ENCODE measurements at regions of chr12 and their contacts with region 1.

Region 1: GRCh38 chr12:1517007-1517406 is 77.4 kb downstream of the FBXL14 start:
- DNase-seq: peak in 1 of 2 experiments; percentile 90
- H3K4me3 ChIP-seq: no peak overlapping the region
- H3K27ac ChIP-seq: no peak overlapping the region
- H3K4me1 ChIP-seq: no peaks in the 10 kb centered on the region; a peak in 2 of 7 replicates
- H3K27me3 ChIP-seq: no peaks in the 10 kb centered on the region
- CTCF ChIP-seq: peak; percentile 75 to 88 (median 79)
- EP300 ChIP-seq: no peak
- POLR2A ChIP-seq: no peak
- RAD21 ChIP-seq: peak; percentile 85 to 95

Region 2: DNA sequence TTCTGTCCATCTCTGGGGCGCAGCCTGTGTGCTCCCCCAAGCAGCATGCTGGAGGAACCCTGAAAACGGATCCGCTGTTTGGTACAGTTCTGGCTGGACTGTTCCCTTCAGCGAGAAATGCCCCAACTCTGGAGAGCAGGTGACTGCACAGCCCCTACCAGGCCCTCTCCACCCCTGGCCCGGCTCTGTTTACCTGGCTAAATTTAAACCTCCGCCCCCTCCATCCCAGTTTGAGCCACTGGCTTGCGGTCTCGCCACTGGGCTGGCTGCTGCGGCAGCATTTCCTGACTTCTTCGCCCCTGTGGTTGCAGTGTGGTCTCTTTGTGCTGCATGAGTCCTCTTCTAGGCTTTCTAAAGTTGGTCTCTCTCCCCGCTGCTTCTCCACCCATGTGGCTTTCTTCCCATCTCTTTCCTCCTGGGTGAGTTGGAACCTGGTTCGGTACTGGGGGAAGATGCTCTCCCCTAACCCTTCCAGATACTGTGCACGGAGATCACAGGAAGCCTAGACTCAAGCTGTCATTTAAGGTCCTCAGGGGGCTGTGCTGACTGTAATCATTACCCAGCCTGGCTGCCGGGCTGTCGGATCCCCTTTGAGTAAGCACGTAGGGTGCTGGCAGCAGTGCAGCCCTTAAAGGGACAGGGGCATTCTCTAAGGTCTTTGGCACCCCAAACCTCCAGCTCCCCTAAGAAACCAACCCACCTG is 16.7 kb after region 1 on chr12:
- CTCF ChIA-PET with region 1: interaction called, 22 read pairs
- POLR2A ChIA-PET with region 1: no interaction called
- DNase-seq: no peak
- H3K4me3 ChIP-seq: no peak overlapping the region
- H3K27ac ChIP-seq: no peak overlapping the region
- H3K4me1 ChIP-seq: peaks cover 0 to 5% (median 4%) of the 10 kb centered on the region in 4 experiments; a peak in 5 of 7 replicates
- H3K27me3 ChIP-seq: peaks cover 45 to 71% (median 56%) of the 10 kb centered on the region in 4 experiments
- CTCF ChIP-seq: no peak
- EP300 ChIP-seq: no peak
- POLR2A ChIP-seq: no peak
- RAD21 ChIP-seq: no peak

Region 3: GRCh38 chr12:1544996-1545700 is 28.1 kb after region 1 on chr12:
- CTCF ChIA-PET with region 1: interaction called, 10 read pairs
- POLR2A ChIA-PET with region 1: no interaction called
- DNase-seq: no peak
- H3K4me3 ChIP-seq: no peak overlapping the region
- H3K27ac ChIP-seq: no peak overlapping the region
- H3K4me1 ChIP-seq: peaks cover 0 to 3% (median 0%) of the 10 kb centered on the region in 4 experiments; a peak in 1 of 7 replicates
- H3K27me3 ChIP-seq: peaks cover 0 to 2% (median 0%) of the 10 kb centered on the region in 4 experiments; a peak in 2 of 7 replicates
- CTCF ChIP-seq: peak in 1 of 3 experiments; percentile 21; a peak in 1 of 4 replicates
- EP300 ChIP-seq: no peak
- POLR2A ChIP-seq: no peak
- RAD21 ChIP-seq: peak; percentile 40 to 53

Region 4: DNA sequence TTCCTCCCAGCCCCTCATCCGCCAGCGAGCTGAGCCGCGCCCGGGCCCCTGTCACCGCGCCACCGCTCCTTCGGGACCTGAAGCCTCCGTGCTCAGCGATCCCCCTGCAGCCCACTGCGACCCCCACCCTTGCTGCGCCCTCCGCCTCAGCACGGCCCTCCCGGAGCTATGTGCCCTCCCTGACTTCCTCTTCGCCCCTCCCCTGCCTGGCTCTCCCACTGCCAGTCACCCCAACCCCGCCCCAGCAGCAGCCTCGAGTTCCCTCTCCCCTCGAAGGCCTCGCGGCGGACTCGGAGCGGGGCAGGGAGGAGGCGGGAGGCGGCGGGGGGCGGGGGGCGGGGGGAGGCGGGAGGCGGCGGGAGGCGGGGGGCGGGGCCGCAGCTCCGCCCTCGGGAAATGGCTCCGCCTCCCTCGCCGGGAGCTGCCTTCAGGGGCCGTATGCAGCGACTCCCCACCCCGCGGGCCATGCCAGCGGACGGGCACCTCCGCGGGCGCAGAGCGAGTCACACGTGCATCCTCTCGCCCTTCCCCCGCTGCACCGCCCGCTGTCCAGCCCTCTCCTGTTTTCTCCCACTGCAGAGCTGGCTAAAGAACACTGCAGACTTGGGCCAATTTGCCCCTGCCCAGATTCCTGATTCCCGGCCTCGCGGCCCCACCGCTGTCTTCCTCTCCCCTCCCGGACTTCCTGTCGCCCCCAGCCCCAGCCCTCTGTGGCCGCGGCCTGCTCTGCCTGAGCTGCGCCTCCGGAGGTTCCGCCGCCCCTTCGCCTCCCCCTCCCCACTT is 144.7 kb after region 1 on chr12:
- CTCF ChIA-PET with region 1: no interaction called
- POLR2A ChIA-PET with region 1: no interaction called
- DNase-seq: peak in 1 of 2 experiments; percentile 70
- H3K4me3 ChIP-seq: peak overlapping the region; percentile 44 to 92 (median 71)
- H3K27ac ChIP-seq: no peak overlapping the region
- H3K4me1 ChIP-seq: no peaks in the 10 kb centered on the region
- H3K27me3 ChIP-seq: peaks cover 6 to 27% (median 20%) of the 10 kb centered on the region in 4 experiments
- CTCF ChIP-seq: no peak
- EP300 ChIP-seq: no peak
- POLR2A ChIP-seq: no peak
- RAD21 ChIP-seq: no peak

Region 5: GRCh38 chr12:1744932-1745331 is 227.9 kb after region 1 on chr12:
- CTCF ChIA-PET with region 1: no interaction called
- POLR2A ChIA-PET with region 1: no interaction called
- DNase-seq: no peak
- H3K4me3 ChIP-seq: no peak overlapping the region
- H3K27ac ChIP-seq: no peak overlapping the region
- H3K4me1 ChIP-seq: peaks cover 0 to 7% (median 1%) of the 10 kb centered on the region in 4 experiments; a peak in 2 of 7 replicates
- H3K27me3 ChIP-seq: peaks cover 0 to 2% (median under 1%) of the 10 kb centered on the region in 4 experiments; a peak in 1 of 7 replicates
- CTCF ChIP-seq: no peak
- EP300 ChIP-seq: no peak
- POLR2A ChIP-seq: no peak
- RAD21 ChIP-seq: no peak

Region 6: GRCh38 chr12:1773937-1774655 is 257.1 kb after region 1 on chr12:
- CTCF ChIA-PET with region 1: no interaction called
- POLR2A ChIA-PET with region 1: no interaction called
- DNase-seq: no peak
- H3K4me3 ChIP-seq: no peak overlapping the region
- H3K27ac ChIP-seq: no peak overlapping the region
- H3K4me1 ChIP-seq: peaks cover 0 to 5% (median 3%) of the 10 kb centered on the region in 4 experiments; a peak in 3 of 7 replicates
- H3K27me3 ChIP-seq: no peaks in the 10 kb centered on the region
- CTCF ChIP-seq: no peak
- EP300 ChIP-seq: no peak
- POLR2A ChIP-seq: no peak
- RAD21 ChIP-seq: no peak